Adrenal gland (tissue), 19 donors: ENCODE measurements at regions of chr18 and their contacts with region 1.

Region 1: DNA sequence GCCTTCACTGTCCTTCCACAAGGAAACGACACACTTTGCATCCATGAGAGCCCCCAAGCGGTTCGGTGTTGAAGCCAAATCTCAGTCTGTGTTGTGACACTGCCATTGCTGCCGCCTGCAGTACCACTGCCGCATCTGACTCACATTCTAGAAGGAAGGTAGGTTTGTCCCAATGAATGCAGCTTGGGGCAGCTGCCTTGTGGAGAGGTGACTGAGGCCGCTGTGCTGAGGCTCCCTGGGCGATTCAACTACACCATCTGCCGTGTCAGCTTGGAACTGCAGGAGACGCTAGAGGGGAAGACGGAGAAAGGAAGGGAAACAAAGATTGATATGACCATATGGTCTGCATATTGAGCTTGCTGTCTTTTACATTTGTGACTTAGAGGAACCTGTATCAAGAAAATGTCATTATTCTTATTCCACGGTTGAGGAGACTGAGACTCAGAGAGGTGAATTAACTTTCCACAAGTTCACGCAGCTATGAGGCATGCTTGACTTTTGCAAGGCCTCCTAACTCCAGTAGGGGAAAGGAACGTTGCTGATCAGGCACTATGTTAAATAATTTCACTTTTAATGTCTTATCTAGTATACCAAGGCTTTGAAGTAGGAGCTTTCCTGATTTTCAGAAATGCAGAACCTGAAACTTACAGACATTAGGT is 43.5 kb upstream of the LMAN1 start:
- DNase-seq: peak; percentile 76 to 90 (median 85)
- H3K4me3 ChIP-seq: no peak overlapping the region
- H3K27ac ChIP-seq: no peak overlapping the region
- H3K4me1 ChIP-seq: no peaks in the 10 kb centered on the region
- H3K27me3 ChIP-seq: no peaks in the 10 kb centered on the region
- CTCF ChIP-seq: peak; percentile 87 to 98 (median 94)
- POLR2A ChIP-seq: no peak

Region 2: GRCh38 chr18:59056706-59057492 is 345.7 kb before region 1 on chr18:
- intact Hi-C with region 1: no loop called
- DNase-seq: peak; percentile 44 to 88 (median 76)
- H3K4me3 ChIP-seq: no peak overlapping the region
- H3K27ac ChIP-seq: no peak overlapping the region
- H3K4me1 ChIP-seq: no peaks in the 10 kb centered on the region
- H3K27me3 ChIP-seq: no peaks in the 10 kb centered on the region
- CTCF ChIP-seq: peak; percentile 62 to 92 (median 89)
- POLR2A ChIP-seq: no peak

Region 3: GRCh38 chr18:59249205-59249774 is 153.3 kb before region 1 on chr18:
- intact Hi-C with region 1: loop called (anchors 5 kb)
- DNase-seq: peak; percentile 42 to 78 (median 54)
- H3K4me3 ChIP-seq: no peak overlapping the region
- H3K27ac ChIP-seq: no peak overlapping the region
- H3K4me1 ChIP-seq: no peaks in the 10 kb centered on the region
- H3K27me3 ChIP-seq: peaks cover 13% of the 10 kb centered on the region
- CTCF ChIP-seq: peak; percentile 57 to 75 (median 70)
- POLR2A ChIP-seq: no peak

Region 4: DNA sequence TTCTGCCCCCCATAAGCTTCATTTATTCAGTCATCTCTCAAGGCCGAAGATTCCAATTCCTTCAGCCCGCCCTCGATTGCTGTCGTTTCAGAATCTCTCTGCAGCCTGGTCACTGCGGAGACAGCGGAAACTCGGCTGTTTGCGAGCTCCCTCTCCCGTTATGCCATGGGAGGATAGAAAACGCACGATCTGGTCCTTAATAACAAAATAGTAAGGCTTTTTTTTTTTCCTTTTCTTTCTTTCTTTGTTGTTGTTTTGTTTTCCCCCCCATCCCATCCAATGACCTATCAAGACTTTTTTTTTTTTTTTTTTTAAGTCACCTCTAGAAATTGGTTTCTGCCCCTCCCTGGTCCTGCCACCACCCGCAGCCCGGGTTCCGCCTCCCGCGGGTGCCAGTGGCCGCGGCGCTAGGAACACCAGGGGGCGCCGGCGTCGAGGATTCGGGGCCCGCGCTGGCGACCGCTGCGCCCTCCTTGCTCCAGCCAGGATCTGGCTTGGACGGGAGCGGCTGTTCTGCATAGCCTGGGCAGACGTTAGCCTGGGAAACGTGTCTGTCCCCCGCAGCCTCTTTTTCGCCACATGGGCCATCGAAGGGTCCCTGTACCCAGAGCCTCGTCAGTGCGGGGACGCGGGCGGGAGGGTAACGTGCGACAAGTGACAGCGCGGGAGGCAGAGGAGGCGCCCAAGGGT is 94.2 kb before region 1 on chr18:
- intact Hi-C with region 1: loop called (anchors 2 to 5 kb)
- DNase-seq: peak; percentile 57 to 83 (median 77)
- H3K4me3 ChIP-seq: peak overlapping the region in 1 of 4 donors; percentile 29
- H3K27ac ChIP-seq: no peak overlapping the region
- H3K4me1 ChIP-seq: peaks cover 0 to 5% of the 10 kb centered on the region in 2 donors
- H3K27me3 ChIP-seq: peaks cover 14% of the 10 kb centered on the region
- CTCF ChIP-seq: peak; percentile 59 to 83 (median 77)
- POLR2A ChIP-seq: no peak